ENCODE measurements at regions of chr1 and their contacts with region 1.

Region 1: DNA sequence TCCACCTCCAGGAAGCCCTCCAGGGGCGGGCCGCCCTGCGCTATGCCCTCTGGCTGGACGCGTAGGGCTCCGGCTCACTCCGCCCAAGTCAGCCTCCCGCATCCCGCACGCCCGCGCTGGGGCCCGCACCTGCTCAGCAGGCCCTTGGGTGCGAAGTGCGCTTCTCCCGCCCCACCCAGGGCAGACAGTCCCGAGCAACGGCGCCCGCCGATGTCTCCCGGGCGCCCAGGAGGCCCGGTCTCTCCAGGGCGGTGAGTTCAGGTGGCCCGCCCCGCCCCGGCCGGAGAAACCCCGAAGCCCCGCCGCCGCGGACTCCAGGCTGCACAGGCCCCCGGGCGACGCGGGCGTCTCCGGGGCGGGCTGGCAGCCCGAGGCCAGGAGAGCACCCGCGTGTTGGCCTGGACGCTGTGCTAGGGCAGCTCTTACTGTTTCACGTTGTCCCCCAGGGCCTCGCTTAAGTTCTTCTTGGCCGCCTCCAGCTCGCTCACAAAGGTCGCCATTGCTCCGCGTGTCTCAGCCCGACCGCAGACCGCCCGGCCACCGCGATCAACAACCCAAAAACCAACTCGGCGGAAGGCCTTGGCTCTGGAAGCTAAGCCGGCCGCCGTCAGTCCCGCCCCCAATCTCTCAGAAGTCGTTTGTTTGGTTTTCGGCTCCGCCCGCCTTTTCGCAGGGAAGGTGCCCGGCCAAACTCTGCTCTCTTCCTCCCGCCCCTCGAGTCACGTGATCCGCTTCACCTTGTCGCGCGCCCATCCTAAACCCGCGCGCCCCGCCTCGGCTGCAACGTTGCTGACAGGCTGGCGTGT is at the start of gene TADA1:
- DNase-seq: peak; percentile 94 to 99 (median 98)
- ATAC-seq: peak; percentile 89
- H3K4me3 ChIP-seq: peak within 1 kb of the TSS; percentile 75
- H3K4me3 Mint-ChIP-seq: peak within 1 kb of the TSS; percentile 92
- H3K27ac ChIP-seq: peak within 1 kb of the TSS; percentile 52 to 73
- H3K27ac Mint-ChIP-seq: peak within 1 kb of the TSS; percentile 88
- H3K4me1 ChIP-seq: peaks cover 27% of the 10 kb centered on the region
- H3K4me1 Mint-ChIP-seq: peaks cover 58% of the 10 kb centered on the region
- H3K27me3 ChIP-seq: no peaks in the 10 kb centered on the region
- H3K27me3 Mint-ChIP-seq: no peaks in the 10 kb centered on the region
- CTCF ChIP-seq: no peak
- total RNA-seq, gene TADA1: 15.8 to 16.4 TPM

Region 2: GRCh38 chr1:166838766-166839599 is 37.0 kb before region 1 on chr1 and contains the start of gene POGK:
- CTCF ChIA-PET with region 1: interaction called, 8 read pairs
- POLR2A ChIA-PET with region 1: interaction called, 60 read pairs
- intact Hi-C with region 1: loop called (anchors 1 to 5 kb)
- DNase-seq: peak; percentile 61 to 94 (median 78)
- ATAC-seq: peak; percentile 87
- H3K4me3 ChIP-seq: peak within 1 kb of the TSS; percentile 67
- H3K4me3 Mint-ChIP-seq: peak within 1 kb of the TSS; percentile 91
- H3K27ac ChIP-seq: peak within 1 kb of the TSS; percentile 56 to 79
- H3K27ac Mint-ChIP-seq: peak within 1 kb of the TSS; percentile 87
- H3K4me1 ChIP-seq: peaks cover 46% of the 10 kb centered on the region
- H3K4me1 Mint-ChIP-seq: peaks cover 53% of the 10 kb centered on the region
- H3K27me3 ChIP-seq: no peaks in the 10 kb centered on the region
- H3K27me3 Mint-ChIP-seq: no peaks in the 10 kb centered on the region
- CTCF ChIP-seq: no peak
- total RNA-seq, gene POGK: 16.1 to 17.6 TPM

Region 3: GRCh38 chr1:166865931-166866330 is 10.0 kb before region 1 on chr1:
- CTCF ChIA-PET with region 1: interaction called, 4 read pairs
- POLR2A ChIA-PET with region 1: interaction called, 10 read pairs
- intact Hi-C with region 1: no loop called
- DNase-seq: no peak
- ATAC-seq: no peak
- H3K4me3 ChIP-seq: no peak overlapping the region
- H3K4me3 Mint-ChIP-seq: no peak overlapping the region
- H3K27ac ChIP-seq: no peak overlapping the region
- H3K27ac Mint-ChIP-seq: no peak overlapping the region
- H3K4me1 ChIP-seq: peaks cover 3% of the 10 kb centered on the region
- H3K4me1 Mint-ChIP-seq: peaks cover 32% of the 10 kb centered on the region
- H3K27me3 ChIP-seq: no peaks in the 10 kb centered on the region
- H3K27me3 Mint-ChIP-seq: no peaks in the 10 kb centered on the region
- CTCF ChIP-seq: no peak

Region 4: DNA sequence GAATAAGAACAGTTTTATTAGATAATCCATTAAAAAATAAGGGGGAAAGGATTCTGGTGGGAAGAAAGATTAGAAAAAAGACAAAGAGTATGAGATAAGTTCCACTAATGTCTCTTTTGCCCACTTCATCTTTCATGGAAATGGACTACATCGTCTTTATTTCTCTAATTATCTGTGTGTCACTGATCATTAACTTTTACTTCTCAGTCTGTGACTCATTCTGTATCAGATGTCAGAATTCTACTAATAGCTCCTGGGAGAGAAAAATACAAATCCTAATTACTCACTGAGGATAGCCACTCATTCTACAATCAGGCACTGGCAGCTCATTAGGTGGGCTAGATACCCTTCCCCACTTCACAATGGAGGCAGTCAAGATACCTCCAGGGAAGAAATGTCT is 57.7 kb after region 1 on chr1:
- CTCF ChIA-PET with region 1: no interaction called
- POLR2A ChIA-PET with region 1: no interaction called
- intact Hi-C with region 1: no loop called
- DNase-seq: no peak
- ATAC-seq: no peak
- H3K4me3 ChIP-seq: no peak overlapping the region
- H3K4me3 Mint-ChIP-seq: no peak overlapping the region
- H3K27ac ChIP-seq: no peak overlapping the region
- H3K27ac Mint-ChIP-seq: no peak overlapping the region
- H3K4me1 ChIP-seq: no peaks in the 10 kb centered on the region
- H3K4me1 Mint-ChIP-seq: no peaks in the 10 kb centered on the region
- H3K27me3 ChIP-seq: no peaks in the 10 kb centered on the region
- H3K27me3 Mint-ChIP-seq: peaks cover 12% of the 10 kb centered on the region
- CTCF ChIP-seq: no peak

Region 5: GRCh38 chr1:167715157-167715999 is 839.4 kb after region 1 on chr1:
- CTCF ChIA-PET with region 1: no interaction called
- POLR2A ChIA-PET with region 1: no interaction called
- intact Hi-C with region 1: loop called in 1 of 2 experiments (anchors 5 kb)
- DNase-seq: peak; percentile 75 to 94 (median 84)
- ATAC-seq: peak; percentile 59
- H3K4me3 ChIP-seq: peak overlapping the region; percentile 79
- H3K4me3 Mint-ChIP-seq: peak overlapping the region; percentile 92
- H3K27ac ChIP-seq: peak overlapping the region in 1 of 2 donors; percentile 27
- H3K27ac Mint-ChIP-seq: peak overlapping the region; percentile 87
- H3K4me1 ChIP-seq: peaks cover 39% of the 10 kb centered on the region
- H3K4me1 Mint-ChIP-seq: peaks cover 47% of the 10 kb centered on the region
- H3K27me3 ChIP-seq: no peaks in the 10 kb centered on the region
- H3K27me3 Mint-ChIP-seq: peaks cover 18% of the 10 kb centered on the region
- CTCF ChIP-seq: peak; percentile 92